ENCODE measurements at regions of chr3 and their contacts with region 1.

Region 1: GRCh38 chr3:44323341-44323955 is 15.1 kb upstream of the TCAIM start:
- DNase-seq: peak; percentile 73
- H3K4me3 Mint-ChIP-seq: no peak overlapping the region
- H3K27ac Mint-ChIP-seq: no peak overlapping the region
- H3K4me1 Mint-ChIP-seq: no peaks in the 10 kb centered on the region
- H3K27me3 Mint-ChIP-seq: no peaks in the 10 kb centered on the region
- CTCF ChIP-seq: peak; percentile 53

Region 2: DNA sequence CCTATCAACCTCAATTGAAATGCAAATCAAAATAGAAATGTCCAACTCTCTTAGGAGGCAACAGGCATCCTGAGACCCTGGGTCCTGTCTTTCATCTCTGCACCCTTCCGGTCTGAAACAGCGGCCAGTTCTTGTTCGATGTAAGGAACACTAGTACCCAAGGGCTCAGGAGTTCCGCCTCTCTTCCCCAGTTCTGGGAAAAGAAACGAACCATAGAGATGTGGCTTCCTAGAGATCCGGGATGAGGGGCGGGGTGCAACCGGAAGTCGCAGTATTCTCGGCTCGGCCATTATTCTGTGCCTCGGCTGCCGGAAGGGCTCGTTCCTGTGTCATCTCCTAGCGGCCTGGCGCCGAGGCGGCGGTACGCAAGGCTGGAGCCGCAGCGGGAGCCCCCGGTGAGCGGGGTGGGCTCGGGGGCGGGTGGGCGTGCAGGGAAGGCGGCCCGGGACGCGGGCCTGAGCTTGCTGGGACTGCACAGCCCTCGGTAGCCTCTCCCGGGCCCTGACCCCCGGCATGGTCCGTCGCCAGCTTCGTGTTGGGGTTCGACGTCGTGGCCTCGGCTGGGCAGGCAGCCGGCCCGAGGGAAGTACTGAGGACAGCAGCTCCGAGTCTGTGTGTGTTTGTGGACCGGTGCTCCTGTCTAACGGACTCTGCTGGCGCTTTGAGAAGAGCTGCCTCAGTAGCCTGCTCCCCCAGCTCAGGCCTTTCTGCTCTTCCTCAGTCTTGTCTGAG is 301.5 kb after region 1 on chr3 and contains the start of gene ZNF197:
- CTCF ChIA-PET with region 1: no interaction called
- intact Hi-C with region 1: loop called (anchors 5 kb)
- DNase-seq: peak; percentile 80
- H3K4me3 Mint-ChIP-seq: peak within 1 kb of the TSS; percentile 73
- H3K27ac Mint-ChIP-seq: peak within 1 kb of the TSS; percentile 60
- H3K4me1 Mint-ChIP-seq: no peaks in the 10 kb centered on the region
- H3K27me3 Mint-ChIP-seq: no peaks in the 10 kb centered on the region
- CTCF ChIP-seq: no peak
- total RNA-seq, gene ZNF197: 12.0 and 14.0 TPM in 2 replicates